IMR-90 (cell line): ENCODE measurements at regions of chr6 and their contacts with region 1.

Region 1: GRCh38 chr6:134640975-134641429 is 308.9 kb downstream of the ALDH8A1 start:
- DNase-seq: peak; percentile 95
- ATAC-seq: peak; percentile 89
- H3K4me3 ChIP-seq: no peak overlapping the region
- H3K27ac ChIP-seq: no peak overlapping the region
- H3K4me1 ChIP-seq: peaks cover 9% of the 10 kb centered on the region
- H3K27me3 ChIP-seq: no peaks in the 10 kb centered on the region
- CTCF ChIP-seq: peak; percentile 95
- POLR2A ChIP-seq: no peak
- RAD21 ChIP-seq: peak; percentile 93

Region 2: GRCh38 chr6:134295953-134296553 is 344.9 kb before region 1 on chr6:
- CTCF ChIA-PET with region 1: interaction called, 3 read pairs
- POLR2A ChIA-PET with region 1: no interaction called
- dilution Hi-C with region 1: no loop called
- in situ Hi-C with region 1: no loop called
- intact Hi-C with region 1: loop called (anchors 1 kb)
- DNase-seq: peak; percentile 100
- ATAC-seq: peak; percentile 95
- H3K4me3 ChIP-seq: no peak overlapping the region
- H3K27ac ChIP-seq: peak overlapping the region; percentile 96
- H3K4me1 ChIP-seq: peaks cover 14% of the 10 kb centered on the region
- H3K27me3 ChIP-seq: no peaks in the 10 kb centered on the region
- CTCF ChIP-seq: no peak
- POLR2A ChIP-seq: peak; percentile 40
- RAD21 ChIP-seq: peak; percentile 14

Region 3: DNA sequence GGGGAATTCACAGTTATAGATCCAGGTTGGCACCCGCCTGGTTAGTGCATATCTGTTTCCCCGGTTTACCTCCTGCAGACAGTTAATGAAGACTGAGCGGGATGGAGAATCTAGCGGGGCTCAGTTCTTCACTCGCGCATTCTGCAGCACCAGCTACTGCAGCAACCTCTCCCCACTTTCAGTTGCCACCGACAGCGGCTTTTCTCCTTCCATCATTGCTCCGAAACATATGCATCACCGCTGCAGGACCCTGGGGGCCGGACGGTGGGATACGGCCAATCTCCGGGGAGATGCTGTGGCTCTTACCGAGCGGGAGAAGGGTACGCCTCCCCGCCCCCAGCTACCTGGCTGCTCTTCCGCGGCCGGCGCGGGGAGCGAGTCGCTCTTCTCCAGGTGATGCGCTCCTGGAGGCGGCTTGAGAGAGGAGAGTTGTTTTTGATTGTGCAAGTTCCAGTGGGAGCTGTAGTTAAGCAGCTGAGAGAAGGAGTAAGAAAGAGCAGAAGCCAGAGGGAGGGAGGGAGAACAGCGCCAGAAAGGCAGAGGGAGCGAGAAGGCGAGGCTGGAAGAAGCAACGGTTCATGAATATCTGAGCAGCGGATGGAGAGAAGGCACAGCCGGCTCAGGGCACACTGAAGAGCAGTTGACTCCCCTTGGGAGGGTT is 323.4 kb before region 1 on chr6 and contains the start of gene SGK1:
- CTCF ChIA-PET with region 1: no interaction called
- POLR2A ChIA-PET with region 1: no interaction called
- dilution Hi-C with region 1: no loop called
- in situ Hi-C with region 1: no loop called
- intact Hi-C with region 1: loop called (anchors 5 kb)
- DNase-seq: peak; percentile 49
- ATAC-seq: peak; percentile 89
- H3K4me3 ChIP-seq: peak within 1 kb of the TSS; percentile 72
- H3K27ac ChIP-seq: no peak within 1 kb of the TSS
- H3K4me1 ChIP-seq: no peaks in the 10 kb centered on the region
- H3K27me3 ChIP-seq: no peaks in the 10 kb centered on the region
- CTCF ChIP-seq: 0 out of 2 replicates have a peak, but pooled peaks have one; percentile 3
- POLR2A ChIP-seq: no peak
- RAD21 ChIP-seq: no peak
- total RNA-seq, gene SGK1: 121 and 211 TPM in 2 replicates

Region 4: GRCh38 chr6:134422426-134423231 is 218.4 kb before region 1 on chr6:
- CTCF ChIA-PET with region 1: no interaction called
- POLR2A ChIA-PET with region 1: no interaction called
- dilution Hi-C with region 1: no loop called
- in situ Hi-C with region 1: no loop called
- intact Hi-C with region 1: loop called (anchors 5 kb)
- DNase-seq: peak; percentile 100
- ATAC-seq: peak; percentile 66
- H3K4me3 ChIP-seq: no peak overlapping the region
- H3K27ac ChIP-seq: peak overlapping the region; percentile 96
- H3K4me1 ChIP-seq: peaks cover 19% of the 10 kb centered on the region
- H3K27me3 ChIP-seq: no peaks in the 10 kb centered on the region
- CTCF ChIP-seq: no peak
- POLR2A ChIP-seq: peak; percentile 40; the same call in 1 of the 2 replicates
- RAD21 ChIP-seq: peak; percentile 24

Region 5: GRCh38 chr6:134686071-134686470 is 45.1 kb after region 1 on chr6:
- CTCF ChIA-PET with region 1: no interaction called
- POLR2A ChIA-PET with region 1: no interaction called
- dilution Hi-C with region 1: no loop called
- in situ Hi-C with region 1: no loop called
- intact Hi-C with region 1: no loop called
- DNase-seq: peak; percentile 27
- ATAC-seq: no peak
- H3K4me3 ChIP-seq: no peak overlapping the region
- H3K27ac ChIP-seq: no peak overlapping the region
- H3K4me1 ChIP-seq: peaks cover 5% of the 10 kb centered on the region
- H3K27me3 ChIP-seq: no peaks in the 10 kb centered on the region; the same call in 1 of the 2 replicates
- CTCF ChIP-seq: no peak
- POLR2A ChIP-seq: no peak
- RAD21 ChIP-seq: no peak

Region 6: DNA sequence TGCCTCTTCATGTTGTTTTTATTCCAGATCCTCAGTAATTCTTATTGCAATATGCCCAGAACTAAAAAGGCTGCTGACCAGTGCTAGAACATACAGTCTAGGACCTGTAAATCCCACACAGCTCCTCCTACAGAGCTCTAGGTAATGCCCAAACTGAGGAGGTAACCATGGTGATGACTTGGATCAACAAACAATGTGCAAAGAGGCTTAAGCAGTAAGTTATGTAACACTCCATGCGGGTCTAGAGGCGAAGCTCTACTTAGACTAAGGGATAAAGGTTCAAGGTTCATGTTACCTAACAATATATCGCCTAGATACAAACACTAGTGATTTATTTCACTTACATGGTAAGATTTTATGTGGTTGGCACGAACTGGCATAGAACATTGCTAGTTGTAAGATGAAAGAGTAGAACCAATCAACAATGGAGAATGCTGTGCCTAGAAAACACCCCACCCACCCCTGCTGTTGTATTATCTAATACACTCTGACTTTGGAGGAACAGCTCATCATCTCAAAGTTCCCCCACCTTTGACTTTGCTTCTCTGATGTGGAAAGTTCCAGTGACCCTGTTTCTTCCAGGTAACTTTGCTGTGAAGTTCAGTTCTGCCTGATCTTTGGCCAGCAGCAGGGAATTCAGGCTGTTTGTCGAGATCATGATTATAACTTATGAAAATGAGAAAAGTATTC is 66.5 kb after region 1 on chr6:
- CTCF ChIA-PET with region 1: no interaction called
- POLR2A ChIA-PET with region 1: no interaction called
- dilution Hi-C with region 1: no loop called
- in situ Hi-C with region 1: no loop called
- intact Hi-C with region 1: no loop called
- DNase-seq: peak; percentile 66
- ATAC-seq: peak; percentile 51
- H3K4me3 ChIP-seq: no peak overlapping the region
- H3K27ac ChIP-seq: peak overlapping the region; percentile 58; the same call in 1 of the 2 replicates
- H3K4me1 ChIP-seq: peaks cover 12% of the 10 kb centered on the region
- H3K27me3 ChIP-seq: no peaks in the 10 kb centered on the region
- CTCF ChIP-seq: no peak
- POLR2A ChIP-seq: no peak
- RAD21 ChIP-seq: no peak

Region 7: GRCh38 chr6:134882426-134883038 is 241.5 kb after region 1 on chr6:
- CTCF ChIA-PET with region 1: no interaction called
- POLR2A ChIA-PET with region 1: no interaction called
- dilution Hi-C with region 1: no loop called
- in situ Hi-C with region 1: no loop called
- intact Hi-C with region 1: loop called (anchors 5 kb)
- DNase-seq: peak; percentile 79
- ATAC-seq: peak; percentile 89
- H3K4me3 ChIP-seq: no peak overlapping the region
- H3K27ac ChIP-seq: peak overlapping the region; percentile 44; the same call in 1 of the 2 replicates
- H3K4me1 ChIP-seq: peaks cover 6% of the 10 kb centered on the region
- H3K27me3 ChIP-seq: no peaks in the 10 kb centered on the region
- CTCF ChIP-seq: peak; percentile 91
- POLR2A ChIP-seq: no peak
- RAD21 ChIP-seq: peak; percentile 95